K562 (cell line): ENCODE measurements at regions of chr3 and their contacts with region 1.

Region 1: DNA sequence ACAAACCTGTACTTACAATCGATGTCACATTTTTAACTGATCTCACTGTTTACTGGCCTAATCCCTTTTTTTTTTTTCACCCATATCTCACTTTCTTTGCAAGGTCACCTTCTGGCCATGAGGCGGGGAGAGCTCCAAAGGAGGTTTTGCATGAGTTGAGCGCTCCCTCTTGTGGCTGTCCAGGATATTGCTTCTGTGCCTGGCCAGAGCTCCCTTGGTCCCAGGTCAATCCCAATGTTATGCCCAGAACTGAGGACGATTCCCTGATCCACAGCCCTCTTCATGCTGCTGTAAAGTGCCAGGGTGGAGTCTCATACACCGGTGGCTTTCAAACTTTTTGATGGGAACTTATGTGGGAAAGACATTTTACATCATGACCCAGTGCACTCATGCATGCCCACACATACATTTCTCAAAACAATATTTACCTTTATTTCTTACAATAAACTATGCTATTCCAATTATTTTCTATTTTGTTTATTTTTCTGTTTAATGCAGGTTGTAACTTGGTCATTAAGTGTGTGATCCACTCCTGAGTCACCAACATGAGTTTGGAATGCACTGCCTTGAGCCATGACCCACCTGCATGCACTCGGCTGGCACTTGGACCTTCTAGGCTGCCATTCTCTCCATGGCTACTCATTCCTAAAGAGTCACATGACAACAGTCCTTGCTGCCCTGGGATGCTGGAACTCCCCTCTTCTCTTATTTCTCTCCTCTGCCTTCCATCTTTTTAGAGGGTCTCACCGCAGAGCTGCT is 9.6 kb upstream of the SST start:
- DNase-seq: peak; percentile 74 to 82 (median 82)
- ATAC-seq: peak; percentile 98
- H3K4me3 ChIP-seq: no peak overlapping the region
- H3K27ac ChIP-seq: no peak overlapping the region
- H3K4me1 ChIP-seq: peaks cover 0 to 4% of the 10 kb centered on the region in 2 experiments; a peak in 1 of 5 replicates
- H3K27me3 ChIP-seq: no peaks in the 10 kb centered on the region
- CTCF ChIP-seq: peak; percentile 94 to 95 (median 94)
- EP300 ChIP-seq: no peak
- POLR2A ChIP-seq: no peak
- RAD21 ChIP-seq: peak; percentile 90 to 91

Region 2: GRCh38 chr3:187112934-187113793 is 566.7 kb before region 1 on chr3:
- CTCF ChIA-PET with region 1: no interaction called
- POLR2A ChIA-PET with region 1: no interaction called
- in situ Hi-C with region 1: no loop called
- intact Hi-C with region 1: loop called (anchors 1 kb)
- DNase-seq: peak in 3 of 4 experiments; percentile 17 to 43 (median 19)
- ATAC-seq: peak; percentile 74
- H3K4me3 ChIP-seq: no peak overlapping the region
- H3K27ac ChIP-seq: no peak overlapping the region
- H3K4me1 ChIP-seq: no peaks in the 10 kb centered on the region; a peak in 1 of 5 replicates
- H3K27me3 ChIP-seq: no peaks in the 10 kb centered on the region
- CTCF ChIP-seq: peak; percentile 43 to 65 (median 56); a peak in 5 of 6 replicates
- EP300 ChIP-seq: no peak
- POLR2A ChIP-seq: no peak
- RAD21 ChIP-seq: peak; percentile 57 to 64

Region 3: GRCh38 chr3:187227658-187228258 is 452.1 kb before region 1 on chr3:
- CTCF ChIA-PET with region 1: no interaction called
- POLR2A ChIA-PET with region 1: interaction called, 3 read pairs
- in situ Hi-C with region 1: loop called (anchors 5 kb)
- intact Hi-C with region 1: no loop called
- DNase-seq: no peak
- ATAC-seq: no peak
- H3K4me3 ChIP-seq: no peak overlapping the region
- H3K27ac ChIP-seq: no peak overlapping the region
- H3K4me1 ChIP-seq: no peaks in the 10 kb centered on the region; a peak in 1 of 5 replicates
- H3K27me3 ChIP-seq: peaks cover 6 to 52% of the 10 kb centered on the region in 2 experiments; a peak in 3 of 5 replicates
- CTCF ChIP-seq: no peak
- EP300 ChIP-seq: no peak
- POLR2A ChIP-seq: no peak
- RAD21 ChIP-seq: no peak

Region 4: DNA sequence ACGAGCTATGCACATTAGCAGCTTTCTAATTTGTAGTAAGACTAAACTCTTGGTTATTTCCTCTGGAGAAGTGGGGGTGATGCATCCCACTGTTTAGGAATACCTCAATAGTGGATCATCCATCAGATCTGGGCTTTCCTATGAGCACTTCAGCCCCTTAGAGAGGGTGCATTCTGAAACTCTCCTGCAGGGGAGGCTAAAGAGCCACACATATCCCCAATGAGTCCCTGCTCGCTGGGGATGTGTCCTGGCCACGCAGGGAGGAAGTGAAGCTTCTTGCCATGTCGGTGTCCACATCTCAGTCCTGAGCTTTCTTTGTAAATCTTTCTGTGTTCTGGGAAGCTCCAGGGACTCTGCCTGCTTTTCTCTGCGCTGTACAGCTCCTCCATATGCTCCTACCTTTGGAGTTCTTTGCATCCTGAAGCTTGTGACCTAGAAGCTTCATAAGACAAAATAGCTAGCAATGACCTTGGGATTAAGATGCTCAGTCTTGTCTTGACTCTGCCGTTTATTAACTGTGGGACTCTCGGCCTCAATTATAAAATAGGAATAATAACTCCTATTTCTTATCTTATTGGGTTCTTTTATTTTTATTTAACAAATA is 360.0 kb before region 1 on chr3:
- CTCF ChIA-PET with region 1: interaction called, 147 read pairs
- POLR2A ChIA-PET with region 1: interaction called, 15 read pairs
- in situ Hi-C with region 1: loop called (anchors 5 kb)
- intact Hi-C with region 1: loop called (anchors 1 kb)
- DNase-seq: peak; percentile 61 to 67 (median 62)
- ATAC-seq: peak; percentile 97
- H3K4me3 ChIP-seq: no peak overlapping the region
- H3K27ac ChIP-seq: no peak overlapping the region
- H3K4me1 ChIP-seq: no peaks in the 10 kb centered on the region; a peak in 1 of 5 replicates
- H3K27me3 ChIP-seq: no peaks in the 10 kb centered on the region; a peak in 1 of 5 replicates
- CTCF ChIP-seq: peak; percentile 79 to 86 (median 82)
- EP300 ChIP-seq: no peak
- POLR2A ChIP-seq: no peak
- RAD21 ChIP-seq: peak; percentile 94 to 97

Region 5: GRCh38 chr3:187430576-187430975 is 249.2 kb before region 1 on chr3:
- CTCF ChIA-PET with region 1: no interaction called
- POLR2A ChIA-PET with region 1: no interaction called
- in situ Hi-C with region 1: no loop called
- intact Hi-C with region 1: loop called (anchors 2 kb)
- DNase-seq: peak; percentile 14 to 21 (median 18)
- ATAC-seq: peak; percentile 75
- H3K4me3 ChIP-seq: no peak overlapping the region
- H3K27ac ChIP-seq: no peak overlapping the region
- H3K4me1 ChIP-seq: no peaks in the 10 kb centered on the region
- H3K27me3 ChIP-seq: no peaks in the 10 kb centered on the region; a peak in 1 of 5 replicates
- CTCF ChIP-seq: peak; percentile 51 to 72 (median 63)
- EP300 ChIP-seq: no peak
- POLR2A ChIP-seq: no peak
- RAD21 ChIP-seq: peak; percentile 53 to 69

Region 6: GRCh38 chr3:187490366-187490765 is 189.5 kb before region 1 on chr3:
- CTCF ChIA-PET with region 1: no interaction called
- POLR2A ChIA-PET with region 1: no interaction called
- in situ Hi-C with region 1: no loop called
- intact Hi-C with region 1: no loop called
- DNase-seq: no peak
- ATAC-seq: no peak
- H3K4me3 ChIP-seq: no peak overlapping the region
- H3K27ac ChIP-seq: no peak overlapping the region
- H3K4me1 ChIP-seq: no peaks in the 10 kb centered on the region
- H3K27me3 ChIP-seq: no peaks in the 10 kb centered on the region
- CTCF ChIP-seq: no peak
- EP300 ChIP-seq: no peak
- POLR2A ChIP-seq: no peak
- RAD21 ChIP-seq: no peak

Region 7: DNA sequence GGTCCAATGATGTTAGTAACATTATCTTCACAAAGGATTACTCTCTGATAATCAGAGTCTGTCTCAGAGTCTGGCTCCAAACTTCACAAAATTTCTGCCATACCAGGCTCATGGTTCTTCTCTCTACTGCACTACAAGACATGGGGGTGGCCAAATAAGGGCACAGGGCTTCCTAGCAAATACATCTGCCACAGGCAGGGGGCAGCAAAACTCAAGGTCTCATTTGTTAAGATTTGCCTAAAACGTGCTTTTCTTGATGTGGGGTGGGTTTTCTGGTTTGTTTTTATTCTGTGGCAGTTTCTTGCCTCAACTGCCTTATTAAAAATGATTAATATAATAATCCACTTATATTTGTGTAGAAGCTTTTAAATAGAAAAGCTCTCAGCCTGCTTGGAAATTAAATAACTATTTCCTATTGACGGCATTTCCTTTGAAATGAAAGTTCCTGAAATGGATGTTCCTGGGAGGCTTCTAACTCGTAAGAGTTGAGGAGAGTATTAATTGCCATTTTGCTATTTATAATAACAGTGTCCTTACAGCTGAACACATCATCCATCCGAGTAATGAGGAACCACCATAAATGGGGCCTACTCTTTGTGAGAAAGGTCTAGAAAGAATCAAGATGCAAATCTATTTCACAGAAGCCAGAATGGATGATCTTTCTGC is 63.4 kb before region 1 on chr3:
- CTCF ChIA-PET with region 1: interaction called, 4 read pairs
- POLR2A ChIA-PET with region 1: no interaction called
- in situ Hi-C with region 1: no loop called
- intact Hi-C with region 1: loop called (anchors 1 kb)
- DNase-seq: peak; percentile 41 to 63 (median 50)
- ATAC-seq: peak; percentile 91
- H3K4me3 ChIP-seq: no peak overlapping the region
- H3K27ac ChIP-seq: no peak overlapping the region
- H3K4me1 ChIP-seq: no peaks in the 10 kb centered on the region
- H3K27me3 ChIP-seq: no peaks in the 10 kb centered on the region
- CTCF ChIP-seq: peak; percentile 58 to 75 (median 69); a peak in 5 of 6 replicates
- EP300 ChIP-seq: no peak
- POLR2A ChIP-seq: no peak
- RAD21 ChIP-seq: peak; percentile 50 to 64

Region 8: DNA sequence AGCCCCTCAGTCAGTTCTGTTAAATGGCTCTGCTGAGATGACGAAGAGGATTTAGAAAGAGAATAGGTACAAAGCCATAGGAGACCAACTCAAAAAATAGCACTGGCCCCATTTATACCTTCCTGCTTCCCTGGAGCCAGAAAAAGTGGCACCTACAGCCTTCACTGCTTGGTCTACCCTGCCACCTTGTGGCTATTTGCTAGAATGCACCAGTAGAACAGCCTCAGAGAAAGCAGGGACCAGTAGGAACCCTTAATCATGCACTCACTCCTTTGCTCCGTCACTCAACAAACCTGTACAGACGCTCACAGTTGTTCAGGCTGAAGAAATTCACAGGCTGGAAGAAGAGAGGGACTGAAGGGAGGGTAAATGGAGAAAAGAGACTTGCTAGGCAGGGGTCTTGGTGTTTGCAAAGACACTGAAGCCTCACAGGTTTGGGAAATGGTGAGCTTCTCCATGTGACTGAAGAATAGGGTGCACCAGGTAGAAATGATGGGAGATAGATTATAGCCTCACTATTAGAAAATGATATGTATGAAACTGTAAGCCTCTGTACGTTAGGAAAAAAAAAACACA is 34.7 kb after region 1 on chr3:
- CTCF ChIA-PET with region 1: interaction called, 5 read pairs
- POLR2A ChIA-PET with region 1: no interaction called
- in situ Hi-C with region 1: no loop called
- intact Hi-C with region 1: loop called (anchors 1 kb)
- DNase-seq: peak; percentile 66 to 76 (median 72)
- ATAC-seq: peak; percentile 92
- H3K4me3 ChIP-seq: no peak overlapping the region
- H3K27ac ChIP-seq: no peak overlapping the region
- H3K4me1 ChIP-seq: no peaks in the 10 kb centered on the region
- H3K27me3 ChIP-seq: no peaks in the 10 kb centered on the region
- CTCF ChIP-seq: peak; percentile 79 to 93 (median 81)
- EP300 ChIP-seq: no peak
- POLR2A ChIP-seq: no peak
- RAD21 ChIP-seq: peak; percentile 92

Region 9: GRCh38 chr3:187902041-187902471 is 222.2 kb after region 1 on chr3:
- CTCF ChIA-PET with region 1: no interaction called
- POLR2A ChIA-PET with region 1: no interaction called
- in situ Hi-C with region 1: no loop called
- intact Hi-C with region 1: no loop called
- DNase-seq: no peak
- ATAC-seq: no peak
- H3K4me3 ChIP-seq: no peak overlapping the region
- H3K27ac ChIP-seq: no peak overlapping the region
- H3K4me1 ChIP-seq: no peaks in the 10 kb centered on the region
- H3K27me3 ChIP-seq: peaks cover 2 to 11% of the 10 kb centered on the region in 2 experiments; a peak in 4 of 5 replicates
- CTCF ChIP-seq: no peak
- EP300 ChIP-seq: no peak
- POLR2A ChIP-seq: no peak
- RAD21 ChIP-seq: no peak

Region 10: DNA sequence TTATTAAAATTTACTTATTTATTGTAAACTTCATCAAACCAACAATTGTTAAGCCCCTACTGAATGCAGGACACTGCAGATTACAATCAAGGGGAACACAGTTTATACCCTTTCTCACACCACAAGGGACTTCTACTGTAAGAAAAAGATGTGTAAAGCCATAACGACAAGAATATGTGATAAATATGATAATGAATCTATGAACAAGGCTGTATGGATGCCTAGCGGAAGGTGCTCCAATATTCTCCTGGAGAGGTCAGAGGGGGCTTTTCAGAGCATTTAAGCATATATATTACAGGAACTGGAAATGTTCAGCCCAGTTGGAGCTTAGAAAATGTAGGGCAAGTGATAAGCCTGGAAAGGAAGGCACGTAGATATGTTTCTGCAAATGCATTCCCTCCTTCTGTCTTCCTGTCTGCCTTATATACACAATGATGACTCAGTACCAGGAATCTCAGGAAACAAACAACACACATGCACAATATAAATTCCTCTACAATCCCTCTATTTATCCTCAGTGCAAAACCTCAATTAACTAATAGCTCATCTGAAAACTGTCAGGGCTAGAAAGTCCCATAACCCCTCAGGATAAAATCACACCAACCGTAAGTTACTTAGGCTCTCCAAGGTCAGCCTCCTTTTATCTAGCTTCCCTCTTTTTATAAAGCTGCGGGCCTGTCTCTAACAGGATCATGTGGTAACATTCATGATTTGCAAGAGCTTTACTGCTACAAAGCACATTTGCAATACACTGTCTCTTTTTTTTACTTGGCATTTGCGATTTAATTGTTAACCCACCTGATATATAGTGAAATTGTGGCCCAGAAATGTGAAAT is 867.2 kb after region 1 on chr3:
- CTCF ChIA-PET with region 1: no interaction called
- POLR2A ChIA-PET with region 1: no interaction called
- in situ Hi-C with region 1: no loop called
- intact Hi-C with region 1: no loop called
- DNase-seq: no peak
- ATAC-seq: no peak
- H3K4me3 ChIP-seq: no peak overlapping the region
- H3K27ac ChIP-seq: no peak overlapping the region
- H3K4me1 ChIP-seq: no peaks in the 10 kb centered on the region
- H3K27me3 ChIP-seq: no peaks in the 10 kb centered on the region
- CTCF ChIP-seq: no peak
- EP300 ChIP-seq: no peak
- POLR2A ChIP-seq: no peak
- RAD21 ChIP-seq: no peak